Dorsolateral prefrontal cortex (tissue), 120 donors: ENCODE measurements at regions of chr6 and their contacts with region 1.

Region 1: GRCh38 chr6:18264219-18264922 is at the start of gene DEK:
- DNase-seq: peak; percentile 82 to 89 (median 84)
- H3K4me3 ChIP-seq: peak within 1 kb of the TSS; percentile 50 to 96 (median 88)
- H3K27ac ChIP-seq: peak within 1 kb of the TSS; percentile 33 to 99 (median 93)
- H3K27me3 ChIP-seq: no peaks in the 10 kb centered on the region
- CTCF ChIP-seq: peak; percentile 29 to 85 (median 65)
- total RNA-seq, gene DEK: 37.6 to 70.7 (median 50.7) TPM

Region 2: DNA sequence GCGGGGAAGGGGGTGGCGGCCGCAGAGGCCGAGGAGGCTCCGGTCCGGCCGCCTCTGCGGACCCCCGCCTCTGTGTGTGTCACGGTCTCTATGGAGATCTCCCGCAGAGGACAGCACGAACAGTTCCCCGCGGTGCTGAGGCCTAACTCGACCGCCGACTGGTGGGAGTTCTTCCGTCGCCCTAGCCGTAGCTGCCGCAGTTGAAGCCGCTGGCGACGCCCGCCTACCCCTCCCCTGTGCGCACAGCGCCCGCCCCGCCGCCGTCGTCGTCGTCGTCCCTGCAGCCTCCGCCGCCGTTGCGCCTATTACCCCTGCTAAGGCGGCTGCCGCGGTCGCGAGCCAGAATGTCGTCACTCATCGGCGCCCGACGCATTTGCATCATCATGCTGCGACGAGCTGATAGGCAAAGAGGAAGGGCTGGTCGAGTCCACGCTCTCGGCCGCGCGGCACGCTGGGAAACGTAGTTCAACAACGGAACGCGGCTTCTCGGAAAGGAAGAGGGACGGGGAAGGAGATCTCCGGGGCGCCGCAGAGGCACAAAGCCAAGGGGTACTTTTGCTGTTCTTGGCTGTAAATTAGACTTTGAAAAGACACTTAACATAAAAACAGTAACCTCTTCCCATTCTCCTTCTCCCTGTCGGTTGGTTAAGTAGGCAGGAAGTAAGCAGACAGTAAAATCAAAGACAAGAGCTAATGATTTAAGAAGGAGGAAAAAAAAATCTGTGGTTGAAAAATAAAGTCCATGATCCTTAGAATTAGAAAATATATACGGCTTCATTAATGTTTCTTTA is 557.6 kb before region 1 on chr6 and contains the start of gene NUP153:
- intact Hi-C with region 1: loop called in 1 of 2 experiments (anchors 5 kb)
- DNase-seq: peak; percentile 96 to 100 (median 99)
- H3K4me3 ChIP-seq: peak within 1 kb of the TSS; percentile 77 to 100 (median 96)
- H3K27ac ChIP-seq: peak within 1 kb of the TSS; percentile 74 to 99 (median 95)
- H3K27me3 ChIP-seq: no peaks in the 10 kb centered on the region
- CTCF ChIP-seq: peak in 31 of 56 donors; percentile 2 to 63 (median 34)
- total RNA-seq, gene NUP153: 26.7 to 40.0 (median 33.5) TPM

Region 3: DNA sequence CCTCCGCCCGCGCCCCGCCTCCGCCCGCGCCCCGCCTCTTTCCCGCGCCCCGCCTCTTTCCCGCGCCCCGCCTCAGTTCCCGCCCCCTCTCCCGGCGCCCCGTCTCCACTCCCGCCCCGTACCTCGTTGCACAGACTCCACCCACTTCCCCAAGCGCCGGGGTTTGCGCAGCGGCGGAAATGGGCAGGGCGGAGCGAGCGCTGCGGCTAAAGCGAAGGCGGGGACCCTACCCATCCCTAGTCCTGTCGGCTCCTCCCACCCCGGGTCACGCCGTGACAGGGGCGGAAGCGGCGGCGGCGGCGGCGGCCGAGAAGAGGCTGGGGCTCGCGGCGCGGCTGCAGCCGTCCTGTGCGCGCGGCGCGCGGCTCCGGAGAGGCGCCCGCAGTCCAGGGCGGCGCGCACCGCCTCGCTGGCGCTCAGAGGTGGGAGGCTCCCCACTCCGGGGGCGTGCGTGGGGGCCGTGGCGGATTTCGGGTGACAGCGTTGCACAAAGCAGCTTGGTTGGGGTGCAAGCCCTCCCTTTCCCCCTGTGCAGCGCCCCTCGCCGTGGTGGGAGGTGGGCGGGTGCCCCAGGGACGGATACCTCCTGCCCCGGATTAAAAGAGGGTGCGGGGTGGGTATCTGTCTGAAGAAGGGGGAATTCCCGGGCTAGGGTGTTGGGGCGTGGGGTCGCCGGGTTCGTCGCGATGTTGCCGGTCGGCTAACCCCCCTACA is 109.1 kb before region 1 on chr6 and contains the start of gene KDM1B:
- intact Hi-C with region 1: loop called (anchors 1 to 5 kb)
- DNase-seq: peak; percentile 95 to 99 (median 98)
- H3K4me3 ChIP-seq: peak within 1 kb of the TSS; percentile 68 to 99 (median 93)
- H3K27ac ChIP-seq: peak within 1 kb of the TSS in 57 of 59 donors; percentile 52 to 93 (median 87)
- H3K27me3 ChIP-seq: no peaks in the 10 kb centered on the region
- CTCF ChIP-seq: peak in 18 of 56 donors; percentile 1 to 50 (median 20)
- total RNA-seq, gene KDM1B: 13.3 to 38.5 (median 24.4) TPM

Region 4: DNA sequence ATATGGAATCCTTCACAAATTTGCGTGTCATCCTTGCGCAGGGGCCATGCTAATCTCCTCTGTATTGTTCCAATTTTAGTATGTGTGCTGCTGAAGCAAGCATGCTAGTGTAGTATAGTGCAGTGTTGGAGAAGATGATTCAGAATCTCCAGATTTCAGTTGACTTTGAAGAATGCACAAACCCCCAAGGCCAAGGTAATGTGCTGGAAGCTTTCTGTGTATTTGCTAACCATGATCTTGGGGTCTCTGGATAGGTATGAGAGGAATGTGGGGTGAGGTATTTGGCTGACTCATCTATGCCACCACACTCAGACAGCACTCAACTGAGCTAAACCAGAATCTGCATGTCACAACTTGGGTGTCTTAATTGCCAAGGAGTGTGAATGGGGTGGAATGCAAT is 42.6 kb after region 1 on chr6:
- intact Hi-C with region 1: no loop called
- DNase-seq: no peak
- H3K4me3 ChIP-seq: no peak overlapping the region
- H3K27ac ChIP-seq: no peak overlapping the region
- H3K27me3 ChIP-seq: no peaks in the 10 kb centered on the region
- CTCF ChIP-seq: no peak